Activated CD8-positive, alpha-beta T cell treated with anti-CD3 and anti-CD28 coated beads, Interleukin-2, amount 10 ng/mL, durations not matched to agents 7 days and 5 days (primary cell): ENCODE measurements at regions of chr22 and their contacts with region 1.

Region 1: DNA sequence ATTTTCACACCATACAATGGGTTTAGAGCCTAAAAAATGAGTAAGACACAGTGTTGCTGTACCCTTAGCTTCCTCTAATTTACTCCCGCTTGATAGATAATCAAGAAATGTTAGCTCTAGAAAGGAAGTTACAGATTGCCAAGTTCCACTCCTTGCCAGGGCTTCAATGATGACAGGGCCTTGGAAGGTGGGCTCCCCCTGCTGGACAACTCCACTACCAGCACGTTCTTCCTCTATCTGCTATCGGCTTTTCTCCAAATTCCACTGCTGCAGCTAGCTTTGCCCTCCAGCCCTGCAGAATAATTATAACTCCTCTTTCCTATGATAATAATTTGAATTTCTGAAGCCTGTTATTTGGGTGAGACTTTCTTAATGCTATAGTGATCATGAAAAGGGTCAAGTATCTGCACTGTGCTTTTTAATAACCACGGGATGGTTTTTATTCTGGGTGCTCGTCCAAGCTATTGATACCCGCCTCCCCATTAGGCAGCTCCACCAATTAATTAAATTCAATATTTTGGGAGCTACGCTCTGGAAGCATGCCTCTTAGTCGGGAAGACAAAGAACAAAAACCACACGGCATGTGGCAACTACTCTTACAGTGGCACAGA is 9.0 kb downstream of the SYN3 start:
- DNase-seq: peak; percentile 69
- ATAC-seq: peak; percentile 60
- H3K4me3 Mint-ChIP-seq: no peak overlapping the region
- H3K27ac Mint-ChIP-seq: no peak overlapping the region
- H3K4me1 Mint-ChIP-seq: peaks cover under 1% of the 10 kb centered on the region
- H3K27me3 Mint-ChIP-seq: peaks cover 26% of the 10 kb centered on the region

Region 2: DNA sequence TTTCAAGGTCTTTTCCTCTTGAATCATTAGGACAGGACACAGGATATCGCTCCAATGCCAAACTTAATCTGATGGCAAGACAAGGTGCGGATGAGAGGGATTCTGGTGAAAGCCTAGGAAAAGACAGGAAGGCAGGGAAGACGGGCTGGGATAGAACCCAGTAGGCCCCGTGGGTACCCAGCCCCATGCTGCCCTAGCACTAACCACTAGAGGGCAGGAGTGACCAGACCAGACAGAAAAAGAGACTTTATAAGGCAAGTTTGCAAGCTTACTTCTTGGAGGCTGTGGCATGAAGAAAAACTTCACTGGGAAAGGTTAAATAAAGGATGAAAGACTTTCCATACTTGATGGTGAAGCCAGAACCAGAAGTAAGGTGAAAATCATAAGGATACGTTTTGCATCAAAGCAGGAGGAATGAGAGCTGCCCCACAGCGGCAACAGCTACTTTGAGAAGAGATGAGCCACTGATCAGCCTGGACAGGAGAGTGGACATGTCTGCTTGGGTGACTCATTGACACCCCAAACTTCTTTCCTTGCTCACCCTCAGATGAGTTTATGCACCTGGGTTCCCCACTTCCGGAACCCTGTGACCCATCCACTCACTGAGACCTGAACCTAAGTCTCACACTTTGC is 30.9 kb before region 1 on chr22:
- CTCF ChIA-PET with region 1: interaction called, 28 read pairs
- POLR2A ChIA-PET with region 1: no interaction called
- DNase-seq: peak; percentile 44
- ATAC-seq: no peak
- H3K4me3 Mint-ChIP-seq: no peak overlapping the region
- H3K27ac Mint-ChIP-seq: no peak overlapping the region
- H3K4me1 Mint-ChIP-seq: no peaks in the 10 kb centered on the region
- H3K27me3 Mint-ChIP-seq: peaks cover 2% of the 10 kb centered on the region

Region 3: DNA sequence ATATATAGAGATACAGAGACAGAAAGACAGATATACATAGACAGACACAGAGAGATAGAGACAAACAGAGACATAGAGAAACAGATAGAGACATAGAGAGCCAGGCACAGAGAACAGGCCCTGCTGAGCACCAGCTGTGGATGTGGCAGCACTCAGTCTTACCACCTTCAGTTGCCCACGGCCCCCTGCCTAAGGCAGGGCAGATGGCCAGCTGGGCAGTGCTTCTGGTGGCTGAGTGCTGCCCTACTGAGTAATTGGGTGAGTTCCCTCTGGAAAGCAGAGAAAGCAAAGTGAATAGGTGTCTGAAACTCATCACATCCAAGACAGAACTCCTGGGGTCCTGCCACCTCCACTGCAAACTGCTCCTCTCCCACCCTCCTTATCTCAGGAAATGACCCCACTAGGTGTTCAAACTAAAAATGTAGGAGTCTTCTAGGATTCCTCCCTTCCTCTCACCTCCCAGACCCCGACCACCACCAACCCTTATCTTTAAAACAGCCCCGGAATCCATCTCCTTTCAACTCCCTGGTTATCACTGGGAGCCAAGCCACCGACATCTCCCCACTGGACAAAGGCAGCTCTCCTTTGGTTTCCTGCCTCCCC is 18.2 kb before region 1 on chr22:
- CTCF ChIA-PET with region 1: no interaction called
- POLR2A ChIA-PET with region 1: no interaction called
- DNase-seq: no peak
- ATAC-seq: no peak
- H3K4me3 Mint-ChIP-seq: no peak overlapping the region
- H3K27ac Mint-ChIP-seq: no peak overlapping the region
- H3K4me1 Mint-ChIP-seq: no peaks in the 10 kb centered on the region
- H3K27me3 Mint-ChIP-seq: peaks cover 3% of the 10 kb centered on the region

Region 4: DNA sequence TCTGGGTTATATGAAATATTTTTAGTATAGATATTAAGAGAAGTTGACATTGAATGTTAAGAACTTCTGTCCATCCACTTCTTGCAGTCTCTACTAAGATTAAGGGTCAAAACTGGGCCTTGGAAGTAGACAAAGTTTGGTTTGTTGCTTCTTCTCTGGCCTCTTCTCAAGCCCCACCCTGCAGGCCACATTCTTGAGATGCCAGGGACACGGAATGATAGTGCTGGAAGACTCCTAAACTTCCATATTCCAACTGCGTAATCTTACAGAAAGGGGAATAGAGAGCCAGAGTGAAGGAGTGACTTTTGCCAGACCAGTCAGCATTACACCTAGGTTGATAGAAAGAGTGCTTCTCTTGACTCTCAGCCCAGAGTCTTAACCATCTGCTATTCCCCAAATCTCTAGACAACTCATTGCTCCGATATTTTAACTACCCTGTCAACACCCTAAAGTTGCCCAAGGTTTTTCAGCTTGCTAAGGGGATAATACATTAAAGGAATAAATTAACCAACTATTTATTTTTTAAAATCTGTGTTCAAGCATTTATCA is 145.4 kb after region 1 on chr22:
- CTCF ChIA-PET with region 1: no interaction called
- POLR2A ChIA-PET with region 1: no interaction called
- DNase-seq: no peak
- ATAC-seq: no peak
- H3K4me3 Mint-ChIP-seq: no peak overlapping the region
- H3K27ac Mint-ChIP-seq: no peak overlapping the region
- H3K4me1 Mint-ChIP-seq: no peaks in the 10 kb centered on the region
- H3K27me3 Mint-ChIP-seq: no peaks in the 10 kb centered on the region